ENCODE measurements at regions of chr13 and their contacts with region 1.

Region 1: GRCh38 chr13:47990920-47991466 is 10.1 kb downstream of the SUCLA2 start:
- DNase-seq: no peak
- H3K4me3 ChIP-seq: no peak overlapping the region
- H3K27ac ChIP-seq: no peak overlapping the region
- H3K4me1 ChIP-seq: no peaks in the 10 kb centered on the region
- H3K27me3 ChIP-seq: no peaks in the 10 kb centered on the region
- CTCF ChIP-seq: no peak

Region 2: GRCh38 chr13:47976325-47976724 is 14.7 kb before region 1 on chr13:
- CTCF ChIA-PET with region 1: no interaction called
- POLR2A ChIA-PET with region 1: no interaction called
- intact Hi-C with region 1: no loop called
- DNase-seq: no peak
- H3K4me3 ChIP-seq: no peak overlapping the region
- H3K27ac ChIP-seq: no peak overlapping the region
- H3K4me1 ChIP-seq: no peaks in the 10 kb centered on the region
- H3K27me3 ChIP-seq: no peaks in the 10 kb centered on the region
- CTCF ChIP-seq: no peak

Region 3: GRCh38 chr13:49543656-49544055 is 1552.7 kb after region 1 on chr13:
- CTCF ChIA-PET with region 1: no interaction called
- POLR2A ChIA-PET with region 1: interaction called, 10 read pairs
- intact Hi-C with region 1: no loop called
- DNase-seq: no peak
- H3K4me3 ChIP-seq: no peak overlapping the region
- H3K27ac ChIP-seq: no peak overlapping the region
- H3K4me1 ChIP-seq: no peaks in the 10 kb centered on the region
- H3K27me3 ChIP-seq: no peaks in the 10 kb centered on the region
- CTCF ChIP-seq: no peak